Activated CD4-positive, alpha-beta T cell treated with anti-CD3 and anti-CD28 coated beads for 36 hours (primary cell): ENCODE measurements at regions of chr1 and their contacts with region 1.

Region 1: DNA sequence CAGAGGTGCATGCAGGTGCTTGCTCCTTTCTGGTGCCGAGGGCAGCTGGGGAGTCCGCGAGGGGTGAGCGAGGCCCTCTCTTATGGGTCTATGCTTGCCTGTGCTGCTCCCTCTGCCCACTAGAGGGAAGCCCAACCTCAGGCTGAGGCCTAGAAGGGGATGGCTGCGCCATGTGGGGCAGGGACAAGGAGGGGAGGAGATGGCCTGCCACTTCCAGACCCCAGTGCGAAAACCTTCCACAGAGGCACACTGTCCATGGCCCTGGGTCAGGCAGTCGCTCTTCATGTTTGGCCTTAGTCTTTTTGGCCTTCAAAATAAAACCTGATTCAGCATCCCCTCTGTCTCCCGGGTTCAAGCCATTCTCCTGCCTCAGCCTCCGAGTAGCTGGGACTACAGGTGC is 14.0 kb downstream of the RHBG start:
- DNase-seq: peak; percentile 79
- ATAC-seq: peak; percentile 91
- H3K4me3 Mint-ChIP-seq: no peak overlapping the region
- H3K27ac Mint-ChIP-seq: no peak overlapping the region
- H3K4me1 Mint-ChIP-seq: peaks cover 5% of the 10 kb centered on the region
- H3K27me3 Mint-ChIP-seq: peaks cover 7% of the 10 kb centered on the region

Region 2: GRCh38 chr1:156096640-156097391 is 286.2 kb before region 1 on chr1:
- CTCF ChIA-PET with region 1: no interaction called
- POLR2A ChIA-PET with region 1: no interaction called
- intact Hi-C with region 1: no loop called
- DNase-seq: peak; percentile 96
- ATAC-seq: peak; percentile 76
- H3K4me3 Mint-ChIP-seq: peak overlapping the region; percentile 60
- H3K27ac Mint-ChIP-seq: peak overlapping the region; percentile 94
- H3K4me1 Mint-ChIP-seq: peaks cover 58% of the 10 kb centered on the region
- H3K27me3 Mint-ChIP-seq: peaks cover 7% of the 10 kb centered on the region

Region 3: DNA sequence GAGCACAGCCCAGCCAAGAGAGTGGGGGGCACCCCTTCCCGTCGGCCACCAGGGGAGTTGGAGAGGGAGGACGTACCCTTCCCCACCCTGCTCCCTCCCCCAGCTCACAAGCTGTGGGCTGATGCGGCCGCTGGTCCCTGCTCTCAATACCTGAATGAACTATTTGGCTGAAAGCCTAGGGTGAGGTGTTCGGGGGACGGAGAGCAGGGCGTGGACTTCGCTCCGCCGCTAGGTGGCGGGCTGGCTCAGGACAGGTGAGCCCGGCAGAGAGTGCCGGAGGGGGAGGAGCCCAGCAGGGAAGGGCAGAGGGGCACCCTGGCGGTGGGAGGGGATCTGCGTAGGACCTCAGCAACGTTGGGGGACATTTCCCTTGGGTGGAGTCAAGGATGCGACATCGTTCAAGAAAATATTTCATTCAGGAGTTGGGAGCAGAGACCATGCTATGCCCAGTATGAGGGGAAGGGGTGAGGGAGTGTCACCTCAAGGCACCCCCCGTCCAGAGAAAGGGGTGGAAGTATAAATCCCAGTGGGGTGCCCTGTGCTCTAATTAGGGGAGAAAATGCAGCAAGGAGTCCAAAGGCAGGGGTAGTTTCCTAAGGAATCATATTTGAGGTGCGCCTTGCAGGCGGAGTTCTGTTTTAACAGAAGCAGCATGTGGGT is 26.0 kb before region 1 on chr1:
- CTCF ChIA-PET with region 1: interaction called, 27 read pairs
- POLR2A ChIA-PET with region 1: no interaction called
- intact Hi-C with region 1: no loop called
- DNase-seq: peak; percentile 87
- ATAC-seq: peak; percentile 95
- H3K4me3 Mint-ChIP-seq: no peak overlapping the region
- H3K27ac Mint-ChIP-seq: no peak overlapping the region
- H3K4me1 Mint-ChIP-seq: peaks cover 8% of the 10 kb centered on the region
- H3K27me3 Mint-ChIP-seq: peaks cover 6% of the 10 kb centered on the region

Region 4: DNA sequence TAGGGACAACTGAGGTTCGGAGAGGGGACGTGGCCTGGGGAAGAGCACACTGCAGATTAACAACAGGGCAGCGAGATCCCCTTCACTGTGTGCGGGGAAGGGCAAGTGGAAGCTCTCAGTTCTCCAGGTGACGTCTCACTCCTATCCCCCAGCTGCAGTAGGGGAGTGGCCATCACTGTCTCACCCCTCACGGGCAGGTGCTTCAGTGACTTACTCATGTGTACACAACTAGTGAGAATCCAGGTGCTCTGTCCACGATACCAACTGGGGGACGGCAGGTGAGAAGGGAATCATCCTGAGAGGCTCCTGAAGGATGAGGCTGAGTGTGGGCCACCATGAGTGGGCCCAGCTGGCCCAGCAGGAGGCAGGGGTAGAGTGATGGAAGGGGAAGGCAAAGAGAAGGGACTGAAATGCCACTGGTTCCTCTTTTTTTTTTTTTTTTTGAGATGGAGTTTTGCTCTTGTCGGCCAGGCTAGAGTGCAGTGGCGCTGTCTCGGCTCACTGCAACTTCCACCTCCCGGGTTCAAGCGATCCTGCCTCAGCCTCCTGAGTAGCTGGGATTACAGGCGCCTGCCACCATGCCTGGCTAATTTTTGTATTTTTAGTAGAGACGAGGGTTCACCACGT is 11.9 kb after region 1 on chr1:
- CTCF ChIA-PET with region 1: interaction called, 28 read pairs
- POLR2A ChIA-PET with region 1: no interaction called
- intact Hi-C with region 1: no loop called
- DNase-seq: no peak
- ATAC-seq: no peak
- H3K4me3 Mint-ChIP-seq: no peak overlapping the region
- H3K27ac Mint-ChIP-seq: no peak overlapping the region
- H3K4me1 Mint-ChIP-seq: peaks cover 3% of the 10 kb centered on the region
- H3K27me3 Mint-ChIP-seq: peaks cover 13% of the 10 kb centered on the region

Region 5: GRCh38 chr1:156428746-156429288 is 45.8 kb after region 1 on chr1:
- CTCF ChIA-PET with region 1: interaction called, 61 read pairs
- POLR2A ChIA-PET with region 1: no interaction called
- intact Hi-C with region 1: no loop called
- DNase-seq: no peak
- ATAC-seq: no peak
- H3K4me3 Mint-ChIP-seq: no peak overlapping the region
- H3K27ac Mint-ChIP-seq: no peak overlapping the region
- H3K4me1 Mint-ChIP-seq: peaks cover 11% of the 10 kb centered on the region
- H3K27me3 Mint-ChIP-seq: peaks cover 85% of the 10 kb centered on the region

Region 6: DNA sequence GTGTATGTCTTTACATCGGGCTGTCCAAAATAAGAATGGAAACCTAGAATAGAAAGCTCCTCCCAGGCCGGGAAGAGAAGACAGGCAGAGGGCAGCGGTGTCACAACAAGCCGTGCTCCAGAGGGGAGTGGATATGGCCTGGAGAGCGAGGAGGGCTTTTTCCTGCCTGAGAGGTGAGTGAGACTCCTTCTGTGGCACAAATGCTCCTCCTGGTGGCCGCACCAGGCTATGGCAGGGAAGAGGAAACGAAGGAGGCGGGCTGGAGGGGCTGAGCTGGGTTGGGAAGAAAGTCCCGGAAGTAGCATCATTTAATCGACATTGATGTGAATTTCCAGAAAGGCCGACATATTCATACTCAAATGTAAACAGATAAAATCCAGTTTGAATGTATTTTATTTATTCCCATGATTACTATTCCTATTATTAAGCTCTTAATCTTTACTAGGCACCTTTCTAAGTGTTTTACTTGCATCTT is 62.8 kb after region 1 on chr1:
- CTCF ChIA-PET with region 1: interaction called, 264 read pairs
- POLR2A ChIA-PET with region 1: interaction called, 8 read pairs
- intact Hi-C with region 1: loop called (anchors 1 kb)
- DNase-seq: peak; percentile 90
- ATAC-seq: peak; percentile 89
- H3K4me3 Mint-ChIP-seq: no peak overlapping the region
- H3K27ac Mint-ChIP-seq: no peak overlapping the region
- H3K4me1 Mint-ChIP-seq: peaks cover 16% of the 10 kb centered on the region
- H3K27me3 Mint-ChIP-seq: peaks cover 33% of the 10 kb centered on the region

Region 7: DNA sequence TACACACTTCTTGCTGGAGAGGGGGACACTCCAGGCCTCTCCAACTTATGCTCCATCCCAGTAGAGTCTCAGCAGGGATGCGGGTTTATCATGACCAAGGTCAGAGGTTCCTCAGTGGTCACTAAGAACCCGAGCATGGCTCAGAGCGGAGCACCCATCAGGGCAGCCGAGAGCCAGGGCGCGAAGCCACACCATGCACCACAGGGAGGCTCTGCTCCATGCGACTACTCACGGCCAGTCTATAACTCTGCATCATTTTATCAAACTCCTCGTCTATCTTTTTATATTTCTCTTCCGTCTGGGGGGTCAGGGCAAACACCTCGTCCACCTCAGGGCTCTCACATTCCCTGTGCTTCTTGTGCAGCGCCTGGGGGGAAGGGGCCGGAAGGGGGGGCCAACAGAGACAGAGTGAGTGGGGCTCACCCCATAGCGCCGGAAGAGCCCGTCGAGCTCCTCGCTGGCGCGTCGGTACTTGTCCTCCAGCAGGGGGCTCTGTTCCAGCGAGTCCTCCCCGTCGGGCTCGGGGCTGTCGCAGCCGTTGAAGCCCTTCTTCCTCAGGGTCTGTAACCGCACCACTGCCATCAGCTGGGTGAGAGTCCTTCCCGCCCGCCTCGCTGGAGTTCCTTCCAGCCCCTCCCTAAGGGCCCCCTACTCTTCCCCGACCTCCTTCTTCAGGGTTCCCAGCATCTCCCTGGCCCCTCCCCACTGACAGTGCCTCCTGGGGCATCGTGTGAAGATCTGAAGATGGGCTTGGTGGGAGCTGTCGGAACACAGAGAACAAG is 97.6 kb after region 1 on chr1:
- CTCF ChIA-PET with region 1: interaction called, 11 read pairs
- POLR2A ChIA-PET with region 1: no interaction called
- intact Hi-C with region 1: no loop called
- DNase-seq: peak; percentile 89
- ATAC-seq: peak; percentile 82
- H3K4me3 Mint-ChIP-seq: peak overlapping the region; percentile 25
- H3K27ac Mint-ChIP-seq: peak overlapping the region; percentile 72
- H3K4me1 Mint-ChIP-seq: peaks cover 64% of the 10 kb centered on the region
- H3K27me3 Mint-ChIP-seq: no peaks in the 10 kb centered on the region

Region 8: GRCh38 chr1:156608036-156608674 is 225.1 kb after region 1 on chr1:
- CTCF ChIA-PET with region 1: interaction called, 12 read pairs
- POLR2A ChIA-PET with region 1: no interaction called
- intact Hi-C with region 1: loop called (anchors 1 to 2 kb)
- DNase-seq: peak; percentile 78
- ATAC-seq: peak; percentile 98
- H3K4me3 Mint-ChIP-seq: no peak overlapping the region
- H3K27ac Mint-ChIP-seq: no peak overlapping the region
- H3K4me1 Mint-ChIP-seq: peaks cover 8% of the 10 kb centered on the region
- H3K27me3 Mint-ChIP-seq: peaks cover 9% of the 10 kb centered on the region